ENCODE measurements at regions of chr11 and their contacts with region 1.

Region 1: GRCh38 chr11:117185736-117186430 is 7.3 kb downstream of the SIDT2 start:
- DNase-seq: peak in 1 of 5 donors; percentile 9
- H3K4me3 ChIP-seq: no peak overlapping the region
- H3K4me3 Mint-ChIP-seq: no peak overlapping the region
- H3K27ac ChIP-seq: no peak overlapping the region
- H3K27ac Mint-ChIP-seq: peak overlapping the region in 3 of 8 donors; percentile 36 to 93 (median 81)
- H3K4me1 ChIP-seq: peaks cover 3% of the 10 kb centered on the region
- H3K4me1 Mint-ChIP-seq: peaks cover 4 to 6% (median 5%) of the 10 kb centered on the region in 3 donors
- H3K27me3 ChIP-seq: no peaks in the 10 kb centered on the region
- H3K27me3 Mint-ChIP-seq: no peaks in the 10 kb centered on the region

Region 2: GRCh38 chr11:117127171-117127901 is 58.5 kb before region 1 on chr11:
- CTCF ChIA-PET with region 1: no interaction called
- POLR2A ChIA-PET with region 1: interaction called, 14 read pairs
- DNase-seq: no peak
- H3K4me3 ChIP-seq: no peak overlapping the region
- H3K4me3 Mint-ChIP-seq: no peak overlapping the region
- H3K27ac ChIP-seq: no peak overlapping the region
- H3K27ac Mint-ChIP-seq: no peak overlapping the region
- H3K4me1 ChIP-seq: no peaks in the 10 kb centered on the region
- H3K4me1 Mint-ChIP-seq: peaks cover 0 to 7% (median 0%) of the 10 kb centered on the region in 3 donors
- H3K27me3 ChIP-seq: no peaks in the 10 kb centered on the region
- H3K27me3 Mint-ChIP-seq: peaks cover 0 to 8% of the 10 kb centered on the region in 2 donors

Measured in CD8-positive, alpha-beta memory T cell (primary cell).